ENCODE measurements at regions of chr4 and their contacts with region 1.

Region 1: GRCh38 chr4:186037692-186038658 is 31.0 kb upstream of the TLR3 start:
- DNase-seq: peak; percentile 51
- H3K4me3 ChIP-seq: no peak overlapping the region
- CTCF ChIP-seq: peak; percentile 44

Region 2: DNA sequence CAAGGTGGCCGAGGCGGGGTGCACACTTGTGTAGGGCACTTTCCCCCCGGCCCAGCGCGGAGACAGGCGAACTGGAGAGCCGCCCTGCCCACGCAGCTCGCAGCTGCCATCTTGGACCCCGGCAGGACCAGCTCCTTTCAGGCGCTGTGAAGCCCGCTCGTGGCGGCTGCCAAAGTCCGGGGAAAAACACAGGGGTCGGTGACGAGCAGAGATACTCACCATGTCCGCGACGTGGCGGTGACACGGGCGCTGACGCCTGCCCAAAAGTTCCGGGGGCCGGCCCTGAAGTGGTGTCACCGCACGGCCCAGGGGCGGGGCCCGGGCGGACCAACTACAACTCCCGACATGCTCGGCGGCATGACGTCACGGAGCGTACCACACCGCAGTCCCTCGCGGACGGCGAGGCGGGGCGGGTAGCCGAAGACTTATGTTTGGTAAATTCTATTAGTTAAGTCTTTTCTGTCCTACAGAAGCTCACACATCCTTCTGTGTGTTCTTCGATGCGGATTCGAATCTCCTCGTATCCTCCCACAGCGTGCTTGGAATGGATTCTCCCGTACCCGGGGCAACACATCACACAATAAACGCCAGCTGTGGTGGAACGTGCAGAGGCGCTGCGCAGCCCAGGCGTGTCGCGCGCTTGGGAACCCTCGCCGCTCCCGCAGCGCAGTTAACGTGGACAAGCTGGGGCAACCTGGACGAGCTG is 612.2 kb before region 1 on chr4 and contains the start of gene UFSP2:
- CTCF ChIA-PET with region 1: interaction called, 11 read pairs
- POLR2A ChIA-PET with region 1: no interaction called
- DNase-seq: peak; percentile 51
- H3K4me3 ChIP-seq: peak within 1 kb of the TSS; percentile 95
- CTCF ChIP-seq: peak; percentile 0

Region 3: GRCh38 chr4:185471235-185472102 is 566.5 kb before region 1 on chr4 and contains the start of gene CCDC110:
- CTCF ChIA-PET with region 1: interaction called, 12 read pairs
- POLR2A ChIA-PET with region 1: no interaction called
- DNase-seq: peak; percentile 64
- H3K4me3 ChIP-seq: peak within 1 kb of the TSS; percentile 72
- CTCF ChIP-seq: peak; percentile 69

Region 4: GRCh38 chr4:185625503-185625902 is 412.5 kb before region 1 on chr4:
- CTCF ChIA-PET with region 1: interaction called, 11 read pairs
- POLR2A ChIA-PET with region 1: no interaction called
- DNase-seq: no peak
- H3K4me3 ChIP-seq: no peak overlapping the region
- CTCF ChIP-seq: no peak

Region 5: GRCh38 chr4:185634066-185634652 is 403.8 kb before region 1 on chr4:
- CTCF ChIA-PET with region 1: interaction called, 143 read pairs
- POLR2A ChIA-PET with region 1: no interaction called
- DNase-seq: no peak
- H3K4me3 ChIP-seq: no peak overlapping the region
- CTCF ChIP-seq: peak; percentile 20

Region 6: GRCh38 chr4:185640811-185641675 is 396.9 kb before region 1 on chr4:
- CTCF ChIA-PET with region 1: interaction called, 143 read pairs
- POLR2A ChIA-PET with region 1: no interaction called
- DNase-seq: peak; percentile 57
- H3K4me3 ChIP-seq: no peak overlapping the region
- CTCF ChIP-seq: peak; percentile 15

Region 7: DNA sequence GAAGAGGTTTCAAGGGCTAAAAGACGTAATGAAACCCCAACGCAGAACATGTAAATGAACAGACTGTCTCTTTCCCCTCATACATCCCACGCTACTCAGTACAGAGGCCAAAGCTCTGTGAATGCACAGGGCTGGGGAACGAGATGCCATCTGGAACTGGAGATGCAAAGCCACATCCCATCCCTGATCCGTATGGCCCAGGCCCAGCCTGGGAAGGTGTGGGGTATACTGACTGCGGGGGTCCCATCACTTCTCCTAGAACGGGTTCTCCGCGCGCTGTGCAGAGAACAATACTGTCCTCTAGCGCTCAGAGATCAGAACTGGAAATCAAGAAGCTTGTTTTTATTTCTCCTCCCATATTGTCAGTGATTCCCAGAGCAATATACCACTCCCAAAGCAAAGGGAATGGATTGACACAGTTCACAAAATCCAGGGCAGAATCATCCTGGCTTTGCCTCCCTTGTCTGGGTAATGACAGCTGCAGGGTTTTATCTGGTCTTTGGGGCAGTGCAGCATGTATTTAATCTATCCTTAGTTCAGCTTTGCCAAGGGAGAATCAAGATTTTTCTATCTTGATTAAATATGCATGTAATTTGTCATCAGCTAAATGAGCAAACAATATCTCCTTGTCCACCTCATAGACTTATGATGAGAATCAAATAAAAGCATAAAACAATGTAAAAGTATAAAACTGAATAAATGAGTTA is 16.4 kb before region 1 on chr4:
- CTCF ChIA-PET with region 1: interaction called, 38 read pairs
- POLR2A ChIA-PET with region 1: no interaction called
- DNase-seq: no peak
- H3K4me3 ChIP-seq: no peak overlapping the region
- CTCF ChIP-seq: peak; percentile 76